Common myeloid progenitor, CD34-positive (primary cell): ENCODE measurements at regions of chr11 and their contacts with region 1.

Region 1: GRCh38 chr11:9739123-9739894 is 75.4 kb downstream of the SWAP70 start:
- DNase-seq: peak in 2 of 3 donors; percentile 72 to 84
- H3K4me3 ChIP-seq: peak overlapping the region in 1 of 7 experiments; percentile 11
- H3K27ac ChIP-seq: peak overlapping the region; percentile 30 to 51
- H3K4me1 ChIP-seq: peaks cover 10 to 35% (median 16%) of the 10 kb centered on the region in 4 experiments
- H3K27me3 ChIP-seq: no peaks in the 10 kb centered on the region

Region 2: GRCh38 chr11:9716275-9717039 is 22.9 kb before region 1 on chr11:
- CTCF ChIA-PET with region 1: interaction called, 13 read pairs
- POLR2A ChIA-PET with region 1: no interaction called
- DNase-seq: peak; percentile 93 to 99 (median 98)
- H3K4me3 ChIP-seq: peak overlapping the region in 4 of 7 experiments; percentile 7 to 65 (median 36)
- H3K27ac ChIP-seq: peak overlapping the region; percentile 83 to 84
- H3K4me1 ChIP-seq: peaks cover 36 to 68% (median 60%) of the 10 kb centered on the region in 4 experiments
- H3K27me3 ChIP-seq: no peaks in the 10 kb centered on the region

Region 3: GRCh38 chr11:9726321-9727022 is 12.8 kb before region 1 on chr11:
- CTCF ChIA-PET with region 1: interaction called, 17 read pairs
- POLR2A ChIA-PET with region 1: no interaction called
- DNase-seq: peak in 2 of 3 donors; percentile 65 to 75
- H3K4me3 ChIP-seq: no peak overlapping the region
- H3K27ac ChIP-seq: peak overlapping the region in 1 of 2 experiments; percentile 33
- H3K4me1 ChIP-seq: peaks cover 10 to 38% (median 19%) of the 10 kb centered on the region in 4 experiments
- H3K27me3 ChIP-seq: no peaks in the 10 kb centered on the region